Panc1 (cell line): ENCODE measurements at regions of chr6 and their contacts with region 1.

Region 1: GRCh38 chr6:145633981-145634627 is 101.2 kb downstream of the EPM2A start:
- DNase-seq: peak; percentile 71
- ATAC-seq: peak; percentile 98
- H3K4me3 ChIP-seq: no peak overlapping the region
- H3K27ac ChIP-seq: no peak overlapping the region
- H3K4me1 ChIP-seq: no peaks in the 10 kb centered on the region
- H3K27me3 ChIP-seq: no peaks in the 10 kb centered on the region
- CTCF ChIP-seq: peak; percentile 89

Region 2: GRCh38 chr6:145214570-145214969 is 419.5 kb before region 1 on chr6:
- CTCF ChIA-PET with region 1: no interaction called
- POLR2A ChIA-PET with region 1: no interaction called
- in situ Hi-C with region 1: no loop called
- intact Hi-C with region 1: loop called (anchors 5 kb)
- DNase-seq: peak; percentile 15
- ATAC-seq: no peak
- H3K4me3 ChIP-seq: no peak overlapping the region
- H3K27ac ChIP-seq: no peak overlapping the region
- H3K4me1 ChIP-seq: no peaks in the 10 kb centered on the region
- H3K27me3 ChIP-seq: no peaks in the 10 kb centered on the region
- CTCF ChIP-seq: peak; percentile 71; the same call in 1 of the 2 replicates

Region 3: DNA sequence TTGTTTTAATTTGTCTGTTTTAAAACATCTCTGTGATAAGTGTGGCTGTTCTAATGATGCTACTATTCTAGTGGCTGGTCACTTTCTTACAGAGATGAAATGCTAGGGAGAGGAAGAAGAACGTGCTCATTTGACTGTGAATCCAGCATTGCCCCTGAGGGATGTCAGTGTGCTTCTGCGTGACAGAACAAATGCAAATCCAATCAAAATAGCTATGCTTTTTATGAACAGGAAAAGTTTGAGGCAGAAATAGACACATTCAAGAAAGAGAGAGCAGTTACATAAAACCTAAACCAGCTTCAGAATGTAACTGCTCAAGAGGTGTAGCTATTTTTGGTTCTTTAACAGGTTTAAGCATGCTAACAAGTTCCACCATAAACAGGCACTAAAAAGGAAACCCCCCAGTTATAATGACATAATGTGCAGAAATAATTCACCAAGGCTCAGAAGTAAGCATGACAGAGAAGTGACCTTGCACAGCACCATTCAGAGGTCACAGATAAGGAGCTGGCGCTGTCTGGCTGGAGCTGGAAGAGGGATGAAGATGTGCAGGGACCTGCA is 284.1 kb before region 1 on chr6:
- CTCF ChIA-PET with region 1: no interaction called
- POLR2A ChIA-PET with region 1: no interaction called
- in situ Hi-C with region 1: no loop called
- intact Hi-C with region 1: loop called (anchors 10 kb)
- DNase-seq: no peak
- ATAC-seq: no peak
- H3K4me3 ChIP-seq: no peak overlapping the region
- H3K27ac ChIP-seq: no peak overlapping the region
- H3K4me1 ChIP-seq: no peaks in the 10 kb centered on the region
- H3K27me3 ChIP-seq: no peaks in the 10 kb centered on the region
- CTCF ChIP-seq: no peak